Posterior cingulate gyrus (tissue), 11 donors: ENCODE measurements at regions of chr1 and their contacts with region 1.

Region 1: GRCh38 chr1:65939636-65940035 is 146.9 kb downstream of the PDE4B start:
- DNase-seq: peak in 1 of 10 donors; percentile 20

Region 2: DNA sequence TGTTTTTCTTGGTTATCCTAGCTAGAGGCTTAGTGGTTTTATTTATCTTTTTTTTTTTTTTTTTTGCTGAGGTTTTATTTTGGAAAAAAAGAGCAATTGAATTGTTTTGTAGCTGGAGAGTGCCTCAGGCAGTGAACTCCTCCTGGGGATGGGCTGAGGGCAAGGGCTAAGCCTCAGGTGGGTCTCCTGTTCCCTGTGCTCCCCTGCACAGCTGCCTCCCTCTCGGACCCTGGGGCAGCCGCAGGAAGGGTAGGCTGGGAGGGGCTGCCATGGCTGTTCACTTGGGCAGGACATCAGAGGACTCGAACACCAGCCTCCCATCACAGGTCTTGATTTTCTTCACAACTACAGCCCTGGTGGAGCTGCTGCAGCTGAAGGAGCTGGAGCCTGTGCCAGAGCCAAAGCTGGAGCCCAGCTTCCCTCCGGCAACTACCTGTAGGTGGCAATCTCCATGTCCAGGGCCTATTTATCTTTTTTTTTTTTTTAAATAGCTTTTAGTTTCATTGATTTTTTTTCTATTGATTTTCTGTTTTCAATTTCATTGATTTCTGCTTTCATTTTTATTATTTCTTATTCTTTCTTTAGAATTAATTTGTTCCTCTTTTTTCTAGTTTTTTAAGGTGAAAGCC is 490.3 kb before region 1 on chr1:
- intact Hi-C with region 1: loop called (anchors 10 kb)
- DNase-seq: peak in 1 of 10 donors; percentile 63

Region 3: GRCh38 chr1:65958561-65959350 is 19.1 kb after region 1 on chr1:
- intact Hi-C with region 1: no loop called
- DNase-seq: no peak